ENCODE measurements at regions of chr5 and their contacts with region 1.

Region 1: DNA sequence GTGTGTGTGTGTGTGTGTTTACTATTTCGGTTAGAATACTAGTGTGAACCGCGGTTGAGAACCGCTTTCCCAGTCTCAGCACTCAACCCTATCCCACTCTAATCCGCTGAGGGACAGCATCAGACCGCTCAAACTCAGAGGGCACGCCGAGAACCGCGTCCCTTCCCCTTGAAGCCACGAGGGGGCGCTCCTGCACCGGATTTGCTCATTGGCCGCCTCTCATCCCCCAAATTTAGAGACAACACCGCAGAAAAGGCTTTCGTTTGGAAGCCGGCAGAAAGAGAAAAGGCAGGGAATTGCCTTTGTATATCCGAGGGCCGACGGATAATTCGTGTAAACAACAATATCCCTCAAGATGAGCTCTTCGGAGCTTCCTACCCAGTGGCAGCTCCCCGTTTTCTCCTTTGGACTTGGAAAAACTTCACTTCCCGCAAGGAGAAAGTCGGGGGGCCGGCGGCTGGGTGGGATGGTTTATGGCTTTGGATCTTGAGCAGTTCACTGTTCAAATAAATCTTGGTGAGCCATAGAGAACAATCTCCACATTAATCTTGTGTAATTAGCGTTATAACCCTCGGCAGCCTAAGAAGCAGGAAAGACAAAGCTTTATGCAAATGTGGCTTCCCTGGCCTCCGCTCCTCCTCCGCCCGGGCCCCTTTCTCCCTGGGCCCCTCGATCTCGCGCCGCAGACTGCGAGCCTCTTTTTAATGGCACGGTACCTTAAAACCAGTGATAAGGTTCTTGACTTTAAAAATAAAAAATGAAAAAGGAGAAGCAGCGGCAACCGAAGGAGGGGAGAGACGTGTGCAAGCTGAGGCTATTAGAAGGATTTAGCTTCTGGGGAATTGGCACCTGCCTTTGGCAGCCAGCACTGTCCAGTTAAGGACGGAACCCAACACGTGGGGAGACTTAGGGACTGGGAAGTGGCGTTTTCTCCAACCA is 296.8 kb downstream of the PARP8 start:
- DNase-seq: no peak
- H3K4me3 ChIP-seq: peak overlapping the region; percentile 11 to 65 (median 42)
- H3K27ac ChIP-seq: no peak overlapping the region
- H3K4me1 ChIP-seq: peaks cover 16 to 44% (median 26%) of the 10 kb centered on the region in 3 donors
- H3K27me3 ChIP-seq: peaks cover 0 to 83% (median 33%) of the 10 kb centered on the region in 4 donors
- CTCF ChIP-seq: peak; percentile 72 to 93 (median 82)
- POLR2A ChIP-seq: no peak

Region 2: GRCh38 chr5:52007230-52007858 is 1044.1 kb after region 1 on chr5:
- intact Hi-C with region 1: loop called (anchors 5 kb)
- DNase-seq: no peak
- H3K4me3 ChIP-seq: no peak overlapping the region
- H3K27ac ChIP-seq: no peak overlapping the region
- H3K4me1 ChIP-seq: no peaks in the 10 kb centered on the region
- H3K27me3 ChIP-seq: no peaks in the 10 kb centered on the region
- CTCF ChIP-seq: peak in 4 of 6 experiments; percentile 20 to 56 (median 46)
- POLR2A ChIP-seq: no peak

Region 3: GRCh38 chr5:52657247-52657645 is 1694.0 kb after region 1 on chr5:
- intact Hi-C with region 1: loop called (anchors 10 kb)
- DNase-seq: no peak
- H3K4me3 ChIP-seq: no peak overlapping the region
- H3K27ac ChIP-seq: no peak overlapping the region
- H3K4me1 ChIP-seq: no peaks in the 10 kb centered on the region
- H3K27me3 ChIP-seq: peaks cover 0 to 21% (median 0%) of the 10 kb centered on the region in 4 donors
- CTCF ChIP-seq: peak; percentile 21 to 56 (median 41)
- POLR2A ChIP-seq: no peak

Measured in esophagus squamous epithelium (tissue), 5 donors.